A673 (cell line): ENCODE measurements at regions of chr2 and their contacts with region 1.

Region 1: DNA sequence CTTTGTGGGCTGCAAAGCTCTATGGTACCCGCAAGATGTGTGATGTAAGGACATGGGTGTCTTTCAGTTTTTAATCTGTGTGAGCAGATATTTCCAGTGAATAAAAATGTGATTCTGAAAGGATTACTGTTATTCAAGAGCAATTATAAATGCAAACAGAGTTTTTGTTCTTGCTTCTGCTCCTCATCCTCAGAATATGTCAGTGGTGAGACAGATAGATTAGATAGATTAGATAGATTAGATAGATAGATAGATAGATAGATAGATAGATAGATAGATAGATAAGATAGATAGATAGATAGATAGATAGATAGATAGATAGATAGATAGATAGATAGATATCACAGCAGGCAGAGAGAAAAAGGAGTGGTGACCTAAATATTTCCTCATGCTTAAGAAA is 142.6 kb downstream of the RTN4 start:
- DNase-seq: no peak
- H3K4me3 ChIP-seq: no peak overlapping the region
- H3K27ac ChIP-seq: no peak overlapping the region
- H3K4me1 ChIP-seq: peaks cover 14% of the 10 kb centered on the region
- H3K27me3 ChIP-seq: no peaks in the 10 kb centered on the region
- CTCF ChIP-seq: no peak

Region 2: DNA sequence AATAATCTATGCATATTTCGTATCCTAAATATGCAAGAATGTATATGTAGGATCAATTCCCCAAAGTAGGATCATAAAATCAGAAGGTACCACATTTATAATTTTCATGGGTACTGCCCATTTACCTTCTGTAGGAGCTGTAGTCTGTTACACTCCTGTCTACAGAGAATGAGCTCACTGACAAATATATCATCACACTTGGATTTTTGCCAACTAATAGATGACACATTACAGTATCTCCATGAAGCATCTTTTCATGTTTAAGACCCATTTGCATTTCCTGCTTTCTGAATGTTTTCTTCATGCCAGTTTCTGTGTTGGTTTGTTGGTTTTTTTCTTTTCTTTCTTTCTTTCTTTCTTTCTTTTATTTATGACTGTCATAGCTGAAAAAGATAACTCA is 255.1 kb before region 1 on chr2:
- CTCF ChIA-PET with region 1: no interaction called
- POLR2A ChIA-PET with region 1: no interaction called
- intact Hi-C with region 1: no loop called
- DNase-seq: no peak
- H3K4me3 ChIP-seq: no peak overlapping the region
- H3K27ac ChIP-seq: no peak overlapping the region
- H3K4me1 ChIP-seq: no peaks in the 10 kb centered on the region
- H3K27me3 ChIP-seq: no peaks in the 10 kb centered on the region
- CTCF ChIP-seq: no peak

Region 3: GRCh38 chr2:55022476-55022875 is 114.8 kb after region 1 on chr2:
- CTCF ChIA-PET with region 1: no interaction called
- POLR2A ChIA-PET with region 1: interaction called, 12 read pairs
- intact Hi-C with region 1: no loop called
- DNase-seq: no peak
- H3K4me3 ChIP-seq: no peak overlapping the region
- H3K27ac ChIP-seq: no peak overlapping the region
- H3K4me1 ChIP-seq: peaks cover 13% of the 10 kb centered on the region
- H3K27me3 ChIP-seq: no peaks in the 10 kb centered on the region
- CTCF ChIP-seq: no peak